H1 (cell line): ENCODE measurements at regions of chr2 and their contacts with region 1.

Region 1: GRCh38 chr2:45607701-45608100 is 3.4 kb downstream of the SRBD1 start:
- DNase-seq: peak in 1 of 2 experiments; percentile 13
- H3K4me3 ChIP-seq: no peak overlapping the region
- H3K27ac ChIP-seq: no peak overlapping the region
- H3K4me1 ChIP-seq: peaks cover 0 to 3% (median 0%) of the 10 kb centered on the region in 4 experiments; a peak in 1 of 7 replicates
- H3K27me3 ChIP-seq: no peaks in the 10 kb centered on the region
- CTCF ChIP-seq: peak in 2 of 3 experiments; percentile 61 to 73; a peak in 3 of 4 replicates
- EP300 ChIP-seq: no peak
- POLR2A ChIP-seq: no peak
- RAD21 ChIP-seq: peak; percentile 17 to 33; a peak in 3 of 4 replicates

Region 2: DNA sequence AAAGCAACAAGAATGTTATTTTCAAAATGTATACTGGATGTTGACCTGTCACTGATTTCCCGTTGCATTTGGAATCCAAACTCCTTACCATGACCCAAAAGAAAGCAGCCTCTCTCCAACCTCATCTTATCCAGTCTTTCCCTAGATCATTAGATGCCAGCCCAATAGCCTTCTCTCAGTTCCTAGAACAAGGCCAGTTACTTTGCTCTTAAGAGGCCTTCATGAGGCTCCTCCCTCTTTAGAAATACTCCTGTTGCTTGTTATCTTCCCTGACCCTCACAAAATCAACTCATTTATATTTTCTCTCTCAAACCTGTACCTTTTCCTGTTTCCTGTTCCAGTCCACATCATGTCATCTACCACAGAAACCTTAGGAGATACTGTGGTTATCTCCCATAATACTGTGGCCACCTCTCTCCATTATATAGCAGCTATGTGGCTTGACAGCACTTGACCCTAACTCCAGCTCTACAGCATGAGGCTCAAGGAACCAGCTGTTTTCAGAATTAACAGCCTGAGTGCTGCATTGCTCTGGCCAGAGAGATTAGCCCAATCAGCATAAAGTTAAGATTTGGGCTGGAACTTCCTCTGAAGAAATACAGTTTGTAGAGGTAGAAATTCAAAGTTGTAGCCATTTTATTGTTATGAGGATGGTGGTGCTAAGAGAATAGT is 19.4 kb before region 1 on chr2:
- CTCF ChIA-PET with region 1: interaction called, 13 read pairs
- POLR2A ChIA-PET with region 1: no interaction called
- DNase-seq: no peak
- H3K4me3 ChIP-seq: no peak overlapping the region
- H3K27ac ChIP-seq: no peak overlapping the region
- H3K4me1 ChIP-seq: peaks cover 0 to 2% (median 0%) of the 10 kb centered on the region in 4 experiments; a peak in 1 of 7 replicates
- H3K27me3 ChIP-seq: no peaks in the 10 kb centered on the region
- CTCF ChIP-seq: no peak
- EP300 ChIP-seq: no peak
- POLR2A ChIP-seq: no peak
- RAD21 ChIP-seq: no peak